Psoas muscle (tissue), 8 donors: ENCODE measurements at regions of chr2 and their contacts with region 1.

Region 1: DNA sequence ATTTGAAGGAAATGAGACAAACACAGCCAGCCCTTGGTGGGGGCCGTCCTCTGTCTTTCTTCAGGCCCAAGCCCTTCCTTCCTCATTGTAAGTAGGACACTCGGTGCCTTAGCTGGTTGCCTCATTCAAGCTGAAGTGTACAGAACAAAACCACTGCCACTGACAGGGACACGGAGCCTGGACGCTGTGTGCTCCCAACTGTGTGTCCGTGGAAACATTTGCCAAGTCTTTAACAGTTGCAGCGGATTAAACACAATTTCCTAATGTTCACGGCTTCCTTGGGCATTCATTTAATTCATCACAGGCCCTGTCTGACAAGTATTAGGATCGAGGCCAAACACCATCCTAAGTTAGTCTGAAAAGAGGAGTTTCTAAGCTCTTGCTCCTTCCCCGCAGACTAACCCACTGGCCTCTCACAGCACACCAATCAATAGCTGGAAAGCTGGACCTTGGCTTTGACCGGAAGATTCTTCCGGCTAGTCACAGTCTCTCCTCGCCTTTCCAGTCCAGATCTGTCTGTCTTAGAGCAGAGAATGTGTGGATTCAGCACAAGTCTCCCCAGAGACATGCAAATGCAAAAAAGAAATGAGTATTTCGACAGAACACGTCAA is 68.7 kb upstream of the ACSL3 start:
- DNase-seq: peak; percentile 50 to 71
- ATAC-seq: peak; percentile 49 to 85 (median 73)
- H3K4me3 ChIP-seq: peak overlapping the region; percentile 16
- H3K27ac ChIP-seq: peak overlapping the region; percentile 71
- H3K4me1 ChIP-seq: peaks cover 16% of the 10 kb centered on the region
- H3K27me3 ChIP-seq: no peaks in the 10 kb centered on the region
- CTCF ChIP-seq: no peak

Region 2: GRCh38 chr2:222250313-222250712 is 541.8 kb before region 1 on chr2:
- intact Hi-C with region 1: loop called in 1 of 2 experiments (anchors 5 kb)
- DNase-seq: no peak
- ATAC-seq: no peak
- H3K4me3 ChIP-seq: no peak overlapping the region
- H3K27ac ChIP-seq: no peak overlapping the region
- H3K4me1 ChIP-seq: no peaks in the 10 kb centered on the region
- H3K27me3 ChIP-seq: no peaks in the 10 kb centered on the region
- CTCF ChIP-seq: no peak

Region 3: DNA sequence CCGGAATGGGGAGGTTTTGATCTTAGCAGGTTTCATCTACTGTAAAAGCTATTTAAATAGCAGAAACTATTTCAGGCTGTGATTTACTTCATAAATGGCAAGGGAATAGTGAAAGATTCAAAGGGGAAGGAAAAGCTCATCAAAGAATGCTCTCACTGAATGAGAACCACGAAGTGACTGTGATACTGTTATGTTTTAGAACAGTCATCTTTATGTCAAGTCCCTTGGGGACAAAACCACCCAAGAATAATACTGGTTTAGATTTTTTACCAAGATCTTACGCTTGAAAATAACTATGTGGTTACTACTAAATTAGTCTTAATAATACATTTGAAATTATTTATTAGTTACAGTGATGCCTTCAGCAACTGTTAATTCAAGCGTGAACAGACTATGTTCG is 164.3 kb before region 1 on chr2:
- intact Hi-C with region 1: no loop called
- DNase-seq: no peak
- ATAC-seq: no peak
- H3K4me3 ChIP-seq: no peak overlapping the region
- H3K27ac ChIP-seq: no peak overlapping the region
- H3K4me1 ChIP-seq: no peaks in the 10 kb centered on the region
- H3K27me3 ChIP-seq: no peaks in the 10 kb centered on the region
- CTCF ChIP-seq: no peak